ENCODE measurements at regions of chr7 and their contacts with region 1.

Region 1: DNA sequence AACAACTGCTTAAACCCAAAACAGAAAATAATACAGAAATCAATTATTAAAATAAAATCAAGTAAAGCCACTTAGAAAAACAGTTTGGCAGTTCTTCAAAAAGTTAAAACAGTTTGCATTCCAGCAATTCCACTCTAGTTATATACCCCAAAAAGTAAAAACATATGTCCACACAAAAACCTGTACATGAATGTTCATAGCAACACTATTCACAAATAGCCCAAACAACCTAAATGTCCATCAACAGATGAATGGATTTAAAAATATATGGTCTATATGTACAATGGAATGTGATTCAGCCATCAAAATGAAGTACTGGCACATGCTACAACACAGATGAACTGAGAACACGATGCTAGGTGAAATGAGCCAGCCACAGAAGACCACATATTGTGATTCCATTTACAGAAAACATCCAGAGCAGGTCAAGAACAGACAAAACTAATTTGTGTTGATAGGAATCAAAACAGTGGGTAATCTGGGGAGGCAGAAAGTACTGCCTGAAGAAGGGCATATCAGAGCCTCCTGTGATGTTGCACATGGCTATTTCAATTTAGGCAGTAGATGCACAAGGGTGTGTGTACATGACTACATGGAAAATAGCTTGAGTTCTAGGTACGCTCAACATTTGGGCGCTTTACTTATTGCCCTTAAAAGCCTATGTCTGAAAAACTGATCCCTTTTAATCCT is 66.3 kb downstream of the CYTH3 start:
- DNase-seq: no peak
- H3K4me3 ChIP-seq: no peak overlapping the region
- CTCF ChIP-seq: no peak

Region 2: GRCh38 chr7:6160191-6160623 is 45.9 kb before region 1 on chr7:
- in situ Hi-C with region 1: no loop called
- DNase-seq: peak; percentile 32
- H3K4me3 ChIP-seq: no peak overlapping the region
- CTCF ChIP-seq: peak; percentile 87

Region 3: GRCh38 chr7:6260291-6261187 is 54.4 kb after region 1 on chr7:
- in situ Hi-C with region 1: loop called (anchors 10 kb)
- DNase-seq: no peak
- H3K4me3 ChIP-seq: no peak overlapping the region
- CTCF ChIP-seq: no peak

Measured in astrocyte of the cerebellum (primary cell).